Posterior cingulate gyrus (tissue), 11 donors: ENCODE measurements at regions of chr14 and their contacts with region 1.

Region 1: DNA sequence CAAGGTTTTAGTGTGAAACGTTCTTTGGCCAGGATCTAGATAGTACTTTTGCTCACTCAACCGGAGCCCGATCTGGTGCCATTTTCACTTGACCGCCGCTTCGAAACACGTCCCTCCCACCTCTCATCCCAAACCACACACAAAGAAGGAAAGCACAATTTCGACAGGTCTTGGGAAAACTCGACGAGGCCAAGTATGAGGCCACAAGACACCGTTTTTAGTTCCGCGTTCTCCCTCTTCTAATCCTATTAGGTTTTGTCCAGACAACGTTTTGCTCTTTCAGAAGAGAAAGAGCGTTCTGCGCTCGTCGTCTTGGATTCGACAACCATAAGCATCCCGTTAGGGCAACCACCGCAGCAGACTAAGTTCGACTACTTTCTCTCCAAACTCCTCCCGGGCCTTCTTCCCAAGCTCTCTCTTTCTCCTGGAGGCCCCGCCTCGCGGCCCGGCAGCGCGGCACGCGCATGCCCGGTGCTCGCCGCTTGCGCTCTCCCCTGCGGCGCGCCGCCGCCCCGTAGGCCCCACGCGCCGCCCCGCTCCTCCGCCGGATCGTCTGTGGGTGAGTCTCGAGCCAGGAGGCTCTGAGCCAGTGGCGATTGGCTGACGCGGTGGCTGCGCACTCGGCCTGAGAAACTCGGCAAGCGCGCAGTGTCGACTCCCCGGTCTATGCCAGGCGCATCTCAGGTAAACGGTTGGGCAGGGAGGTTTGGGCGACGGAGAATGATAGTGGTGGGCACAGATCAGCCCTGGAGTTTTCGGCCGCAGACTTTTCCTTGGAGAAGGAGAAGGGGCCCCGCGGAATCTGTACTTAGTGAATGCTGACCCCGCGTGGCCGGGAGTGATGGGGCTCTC is at the start of gene MIPOL1:
- DNase-seq: peak; percentile 63 to 97 (median 80)

Region 2: DNA sequence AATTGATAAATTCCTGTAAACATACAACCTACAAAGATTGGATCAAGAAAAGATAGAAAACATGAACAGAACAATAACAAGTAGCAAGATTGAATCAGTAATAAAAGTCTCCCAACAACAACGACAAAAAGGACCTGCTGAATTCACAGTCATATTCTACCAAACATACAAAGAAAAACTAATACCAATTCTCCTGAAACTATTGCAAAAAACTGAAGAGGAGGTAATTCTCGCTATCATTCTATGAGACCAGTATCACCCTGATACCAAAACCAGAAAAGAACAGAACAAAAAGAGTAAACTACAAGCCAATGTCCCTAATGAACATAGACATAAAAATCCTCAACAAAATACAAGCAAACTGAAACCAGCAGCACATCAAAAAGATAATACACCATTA is 39.7 kb before region 1 on chr14:
- intact Hi-C with region 1: no loop called
- DNase-seq: no peak

Region 3: DNA sequence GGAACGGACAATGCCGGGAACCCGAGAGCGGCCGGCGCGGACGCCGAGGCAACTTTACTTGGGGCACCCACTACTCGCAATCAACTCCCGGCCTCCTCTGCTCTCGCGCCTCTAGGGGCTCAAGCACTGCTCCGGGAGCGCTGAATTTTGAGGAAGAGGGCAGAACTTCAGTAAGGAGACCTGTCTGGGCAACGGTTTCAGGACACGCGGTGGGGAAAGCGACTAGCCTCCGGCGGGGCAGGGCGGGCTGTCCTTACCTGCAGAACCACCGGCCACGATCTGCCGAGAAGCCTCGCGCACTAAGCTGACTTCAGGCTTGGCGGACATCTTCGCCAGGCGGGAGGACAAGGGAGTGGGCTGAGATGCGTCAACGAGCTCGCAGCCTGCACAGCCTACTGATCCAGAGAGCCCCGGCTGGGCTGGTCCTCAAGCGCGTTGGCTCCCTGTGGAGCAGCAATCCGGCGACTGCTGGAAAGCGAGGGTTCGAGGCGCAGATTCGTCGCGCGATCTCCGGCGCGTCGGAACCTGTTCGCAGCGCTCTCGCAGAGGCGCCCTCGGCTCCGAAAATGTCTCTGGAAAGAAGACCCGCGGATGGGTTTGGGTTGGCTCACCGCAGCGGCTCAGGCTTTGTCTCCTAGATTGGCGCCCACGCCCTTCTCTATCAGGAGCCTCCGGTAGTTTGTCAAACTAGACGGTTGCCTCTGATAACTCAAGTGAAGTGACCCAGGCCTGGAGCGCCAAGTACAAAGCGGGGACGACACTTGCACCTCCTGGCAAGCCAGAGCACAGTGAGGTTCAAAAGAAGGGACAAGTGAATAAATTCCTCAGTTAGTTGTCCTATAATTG is 25.4 kb before region 1 on chr14 and contains the start of gene SLC25A21:
- intact Hi-C with region 1: loop called (anchors 2 kb)
- DNase-seq: peak; percentile 63 to 97 (median 78)